Activated T-helper 2 cell treated with anti-CD3 and anti-CD28 coated beads, Interferon-gamma antibody, Interleukin-2, Interleukin-4, amounts not matched to agents 10 μg/mL and 5 μg/mL and 100 μg/mL, durations not matched to agents 14 hours and 24 hours and 36 hours (primary cell): ENCODE measurements at regions of chr2 and their contacts with region 1.

Region 1: GRCh38 chr2:208013285-208014178 is 11.8 kb downstream of the PLEKHM3 start:
- DNase-seq: no peak
- H3K4me3 Mint-ChIP-seq: peak overlapping the region; percentile 34
- H3K27ac Mint-ChIP-seq: peak overlapping the region; percentile 83
- H3K4me1 Mint-ChIP-seq: peaks cover 42% of the 10 kb centered on the region
- H3K27me3 Mint-ChIP-seq: no peaks in the 10 kb centered on the region

Region 2: DNA sequence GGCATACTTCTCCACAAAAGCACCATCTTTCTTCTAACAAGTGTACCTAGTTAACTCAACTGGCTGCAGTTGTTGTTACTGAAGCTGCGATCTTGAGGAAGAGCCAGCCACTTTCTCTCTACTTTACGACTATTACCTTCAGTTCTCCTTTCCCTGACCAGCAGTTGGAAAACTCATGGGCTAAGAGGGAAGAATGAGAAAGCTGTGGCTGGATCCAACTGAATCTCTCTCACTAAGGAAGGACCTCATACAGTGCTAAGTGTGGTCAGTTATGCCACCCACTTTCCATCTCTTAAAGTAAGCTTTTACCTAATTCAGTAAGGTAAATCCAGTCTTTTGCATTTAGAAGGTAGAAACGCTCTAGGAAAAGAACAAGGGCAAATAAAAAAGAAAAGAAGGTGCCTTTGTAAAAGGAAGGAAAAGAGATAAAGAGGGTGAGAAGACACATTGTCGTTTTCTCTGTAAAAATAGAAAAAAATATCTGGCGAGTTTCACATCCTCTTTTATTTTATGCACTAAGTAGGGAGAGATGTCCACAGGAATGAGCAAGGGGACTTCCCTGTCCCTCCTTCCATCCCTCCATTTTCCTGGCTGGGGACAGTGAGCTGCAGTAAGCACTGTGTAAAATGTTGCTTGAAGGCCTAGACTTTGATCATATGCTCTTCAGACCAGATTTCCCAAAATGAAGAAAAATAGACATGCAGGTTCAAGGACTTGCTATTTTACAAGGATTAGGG is 61.6 kb before region 1 on chr2:
- intact Hi-C with region 1: no loop called
- DNase-seq: no peak
- H3K4me3 Mint-ChIP-seq: no peak overlapping the region
- H3K27ac Mint-ChIP-seq: no peak overlapping the region
- H3K4me1 Mint-ChIP-seq: no peaks in the 10 kb centered on the region
- H3K27me3 Mint-ChIP-seq: no peaks in the 10 kb centered on the region

Region 3: GRCh38 chr2:207974216-207974605 is 39.3 kb before region 1 on chr2:
- intact Hi-C with region 1: loop called (anchors 5 kb)
- DNase-seq: no peak
- H3K4me3 Mint-ChIP-seq: no peak overlapping the region
- H3K27ac Mint-ChIP-seq: no peak overlapping the region
- H3K4me1 Mint-ChIP-seq: peaks cover 16% of the 10 kb centered on the region
- H3K27me3 Mint-ChIP-seq: no peaks in the 10 kb centered on the region

Region 4: DNA sequence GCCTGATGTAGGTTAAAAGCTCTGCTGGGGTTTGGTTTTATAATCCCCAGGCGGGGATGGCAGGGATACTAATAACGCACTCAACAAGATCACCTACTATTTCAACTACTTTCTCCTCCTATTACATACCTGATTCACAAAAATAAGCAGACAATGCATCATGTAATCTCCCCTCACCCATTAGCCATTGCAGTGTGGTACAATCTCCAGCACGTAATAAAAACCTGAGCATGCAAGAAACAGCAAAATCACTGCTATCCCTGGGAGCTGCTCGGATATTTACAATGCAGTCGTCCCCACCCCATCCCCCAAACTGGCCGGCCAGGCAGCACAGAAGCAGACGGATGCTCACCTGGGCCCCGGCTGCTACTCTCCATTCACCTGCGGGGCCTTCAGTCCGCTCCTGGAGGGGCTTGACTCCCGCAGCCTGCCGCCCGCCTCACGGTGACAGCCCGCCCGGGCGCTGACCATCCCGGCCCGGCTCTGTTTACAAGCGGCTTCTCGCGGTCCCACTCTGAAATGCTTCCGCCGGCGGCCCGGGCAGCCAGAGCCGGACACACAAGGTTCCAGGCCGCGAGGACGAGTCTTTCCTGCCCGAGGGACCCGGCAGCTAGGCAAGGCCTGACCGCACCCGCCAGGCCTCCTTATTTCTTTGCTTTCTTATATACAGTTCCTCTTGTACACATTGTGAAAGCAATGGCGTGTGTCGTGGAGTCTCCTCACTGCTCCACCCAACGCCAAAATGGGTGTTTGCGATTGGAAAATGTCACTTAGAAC is 11.7 kb after region 1 on chr2 and contains the start of gene PLEKHM3:
- intact Hi-C with region 1: loop called (anchors 1 kb)
- DNase-seq: peak; percentile 76
- H3K4me3 Mint-ChIP-seq: peak within 1 kb of the TSS; percentile 100
- H3K27ac Mint-ChIP-seq: peak within 1 kb of the TSS; percentile 84
- H3K4me1 Mint-ChIP-seq: peaks cover 19% of the 10 kb centered on the region
- H3K27me3 Mint-ChIP-seq: peaks cover 3% of the 10 kb centered on the region
- total RNA-seq, gene PLEKHM3: 7.1 and 8.4 TPM in 2 replicates

Region 5: DNA sequence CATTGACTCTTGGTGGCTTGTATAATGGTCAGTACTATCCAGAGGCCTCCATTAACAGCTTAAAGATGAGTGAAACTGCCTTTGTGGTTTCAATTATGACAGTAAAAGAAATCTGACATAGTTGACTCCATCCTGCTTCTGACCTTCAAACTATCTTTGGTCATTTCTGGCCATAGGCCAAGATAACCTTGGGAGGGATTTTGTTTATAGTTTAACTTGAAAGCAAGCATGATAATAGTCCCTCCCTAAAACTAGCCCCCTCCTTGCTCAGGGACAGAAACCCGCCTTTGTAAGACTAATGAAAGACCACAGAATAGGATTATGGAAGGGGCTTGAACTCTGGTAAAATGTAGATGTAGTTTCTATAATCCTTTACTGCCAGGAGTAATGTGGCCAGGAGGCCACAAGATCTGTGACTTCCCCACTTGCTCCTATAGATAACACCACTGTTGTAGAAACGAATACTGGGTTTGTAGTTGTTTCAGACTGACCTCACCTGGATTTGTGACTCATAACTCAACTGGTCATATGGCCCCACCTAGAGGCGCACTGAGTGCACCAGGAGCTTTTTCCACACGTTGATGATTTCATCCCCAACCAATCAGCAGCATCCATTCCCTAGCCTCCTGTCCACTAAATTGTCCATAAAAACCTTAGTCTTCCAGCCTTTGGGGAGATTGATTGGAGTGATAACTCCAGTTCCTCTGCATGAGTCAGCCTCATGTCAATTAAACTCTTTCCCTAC is 20.4 kb after region 1 on chr2:
- intact Hi-C with region 1: loop called (anchors 2 kb)
- DNase-seq: no peak
- H3K4me3 Mint-ChIP-seq: no peak overlapping the region
- H3K27ac Mint-ChIP-seq: no peak overlapping the region
- H3K4me1 Mint-ChIP-seq: peaks cover 6% of the 10 kb centered on the region
- H3K27me3 Mint-ChIP-seq: peaks cover 16% of the 10 kb centered on the region